ENCODE measurements at regions of chr6 and their contacts with region 1.

Region 1: GRCh38 chr6:26031595-26032339 is 55.5 kb upstream of the HFE start:
- DNase-seq: peak; percentile 56 to 94 (median 90)
- ATAC-seq: peak; percentile 79
- H3K4me3 ChIP-seq: peak overlapping the region; percentile 70
- H3K4me3 Mint-ChIP-seq: peak overlapping the region; percentile 89 to 98 (median 96)
- H3K27ac ChIP-seq: peak overlapping the region; percentile 69
- H3K27ac Mint-ChIP-seq: peak overlapping the region; percentile 93 to 98 (median 96)
- H3K4me1 ChIP-seq: peaks cover 23 to 31% of the 10 kb centered on the region in 2 donors
- H3K4me1 Mint-ChIP-seq: peaks cover 14 to 69% (median 43%) of the 10 kb centered on the region in 7 donors
- H3K27me3 ChIP-seq: no peaks in the 10 kb centered on the region
- H3K27me3 Mint-ChIP-seq: peaks cover 0 to 7% (median 0%) of the 10 kb centered on the region in 5 donors

Region 2: GRCh38 chr6:25359191-25359861 is 672.4 kb before region 1 on chr6:
- CTCF ChIA-PET with region 1: no interaction called
- POLR2A ChIA-PET with region 1: no interaction called
- intact Hi-C with region 1: no loop called
- DNase-seq: no peak
- ATAC-seq: no peak
- H3K4me3 ChIP-seq: no peak overlapping the region
- H3K4me3 Mint-ChIP-seq: no peak overlapping the region
- H3K27ac ChIP-seq: no peak overlapping the region
- H3K27ac Mint-ChIP-seq: peak overlapping the region in 4 of 9 donors; percentile 18 to 55 (median 38)
- H3K4me1 ChIP-seq: no peaks in the 10 kb centered on the region
- H3K4me1 Mint-ChIP-seq: peaks cover 0 to 69% (median 34%) of the 10 kb centered on the region in 7 donors
- H3K27me3 ChIP-seq: no peaks in the 10 kb centered on the region
- H3K27me3 Mint-ChIP-seq: no peaks in the 10 kb centered on the region

Region 3: GRCh38 chr6:26045065-26045927 is 13.5 kb after region 1 on chr6:
- CTCF ChIA-PET with region 1: interaction called, 69 read pairs
- POLR2A ChIA-PET with region 1: interaction called, 2,497 read pairs
- intact Hi-C with region 1: loop called (anchors 1 kb)
- DNase-seq: peak; percentile 39 to 93 (median 89)
- ATAC-seq: peak; percentile 68
- H3K4me3 ChIP-seq: peak overlapping the region; percentile 91
- H3K4me3 Mint-ChIP-seq: peak overlapping the region; percentile 87 to 98 (median 94)
- H3K27ac ChIP-seq: peak overlapping the region; percentile 90
- H3K27ac Mint-ChIP-seq: peak overlapping the region; percentile 80 to 98 (median 95)
- H3K4me1 ChIP-seq: peaks cover 7 to 19% of the 10 kb centered on the region in 2 donors
- H3K4me1 Mint-ChIP-seq: peaks cover 8 to 51% (median 20%) of the 10 kb centered on the region in 7 donors
- H3K27me3 ChIP-seq: no peaks in the 10 kb centered on the region
- H3K27me3 Mint-ChIP-seq: peaks cover 0 to 3% (median 0%) of the 10 kb centered on the region in 5 donors

Region 4: GRCh38 chr6:26087284-26088115 is 55.7 kb after region 1 on chr6 and contains the start of gene HFE:
- CTCF ChIA-PET with region 1: no interaction called
- POLR2A ChIA-PET with region 1: interaction called, 24 read pairs
- intact Hi-C with region 1: no loop called
- DNase-seq: peak in 8 of 9 donors; percentile 32 to 46 (median 38)
- ATAC-seq: peak; percentile 41
- H3K4me3 ChIP-seq: peak within 1 kb of the TSS; percentile 88
- H3K4me3 Mint-ChIP-seq: peak within 1 kb of the TSS; percentile 84 to 91 (median 88)
- H3K27ac ChIP-seq: peak within 1 kb of the TSS; percentile 72
- H3K27ac Mint-ChIP-seq: peak within 1 kb of the TSS; percentile 73 to 91 (median 84)
- H3K4me1 ChIP-seq: peaks cover 18 to 23% of the 10 kb centered on the region in 2 donors
- H3K4me1 Mint-ChIP-seq: peaks cover 31 to 51% (median 39%) of the 10 kb centered on the region in 7 donors
- H3K27me3 ChIP-seq: no peaks in the 10 kb centered on the region
- H3K27me3 Mint-ChIP-seq: peaks cover 0 to 5% (median 5%) of the 10 kb centered on the region in 5 donors
- total RNA-seq, gene HFE: 1.5 to 4.6 (median 2.5) TPM

Region 5: DNA sequence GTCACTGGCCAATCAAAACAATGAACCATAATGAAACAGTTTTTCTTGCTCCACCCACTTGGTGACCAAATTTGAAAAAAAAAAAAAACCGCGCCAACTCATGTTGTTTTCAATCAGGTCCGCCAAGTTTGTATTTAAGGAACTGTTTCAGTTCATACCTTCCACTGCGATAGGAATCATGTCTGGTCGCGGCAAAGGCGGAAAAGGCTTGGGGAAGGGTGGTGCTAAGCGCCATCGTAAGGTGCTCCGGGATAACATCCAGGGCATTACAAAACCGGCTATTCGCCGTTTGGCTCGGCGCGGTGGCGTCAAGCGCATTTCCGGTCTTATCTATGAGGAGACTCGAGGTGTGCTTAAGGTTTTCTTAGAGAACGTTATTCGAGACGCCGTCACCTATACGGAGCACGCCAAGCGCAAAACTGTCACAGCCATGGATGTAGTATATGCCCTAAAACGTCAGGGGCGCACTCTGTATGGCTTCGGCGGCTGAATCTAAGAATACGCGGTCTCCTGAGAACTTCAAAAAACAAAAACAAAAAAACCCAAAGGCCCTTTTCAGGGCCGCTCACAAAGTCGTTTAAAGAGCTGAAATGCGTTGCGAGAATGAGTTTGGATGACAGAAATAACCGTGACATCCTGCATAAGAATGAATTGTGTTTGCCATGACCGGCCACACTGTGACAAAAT is 72.1 kb after region 1 on chr6:
- CTCF ChIA-PET with region 1: interaction called, 3 read pairs
- POLR2A ChIA-PET with region 1: interaction called, 78 read pairs
- intact Hi-C with region 1: loop called (anchors 1 kb)
- DNase-seq: peak; percentile 83 to 96 (median 95)
- ATAC-seq: peak; percentile 94
- H3K4me3 ChIP-seq: peak overlapping the region; percentile 40
- H3K4me3 Mint-ChIP-seq: peak overlapping the region; percentile 81 to 97 (median 89)
- H3K27ac ChIP-seq: peak overlapping the region; percentile 75
- H3K27ac Mint-ChIP-seq: peak overlapping the region; percentile 96 to 100 (median 98)
- H3K4me1 ChIP-seq: peaks cover 4 to 12% of the 10 kb centered on the region in 2 donors
- H3K4me1 Mint-ChIP-seq: peaks cover 7 to 25% (median 22%) of the 10 kb centered on the region in 7 donors
- H3K27me3 ChIP-seq: no peaks in the 10 kb centered on the region
- H3K27me3 Mint-ChIP-seq: peaks cover 0 to 3% (median 0%) of the 10 kb centered on the region in 5 donors

Region 6: DNA sequence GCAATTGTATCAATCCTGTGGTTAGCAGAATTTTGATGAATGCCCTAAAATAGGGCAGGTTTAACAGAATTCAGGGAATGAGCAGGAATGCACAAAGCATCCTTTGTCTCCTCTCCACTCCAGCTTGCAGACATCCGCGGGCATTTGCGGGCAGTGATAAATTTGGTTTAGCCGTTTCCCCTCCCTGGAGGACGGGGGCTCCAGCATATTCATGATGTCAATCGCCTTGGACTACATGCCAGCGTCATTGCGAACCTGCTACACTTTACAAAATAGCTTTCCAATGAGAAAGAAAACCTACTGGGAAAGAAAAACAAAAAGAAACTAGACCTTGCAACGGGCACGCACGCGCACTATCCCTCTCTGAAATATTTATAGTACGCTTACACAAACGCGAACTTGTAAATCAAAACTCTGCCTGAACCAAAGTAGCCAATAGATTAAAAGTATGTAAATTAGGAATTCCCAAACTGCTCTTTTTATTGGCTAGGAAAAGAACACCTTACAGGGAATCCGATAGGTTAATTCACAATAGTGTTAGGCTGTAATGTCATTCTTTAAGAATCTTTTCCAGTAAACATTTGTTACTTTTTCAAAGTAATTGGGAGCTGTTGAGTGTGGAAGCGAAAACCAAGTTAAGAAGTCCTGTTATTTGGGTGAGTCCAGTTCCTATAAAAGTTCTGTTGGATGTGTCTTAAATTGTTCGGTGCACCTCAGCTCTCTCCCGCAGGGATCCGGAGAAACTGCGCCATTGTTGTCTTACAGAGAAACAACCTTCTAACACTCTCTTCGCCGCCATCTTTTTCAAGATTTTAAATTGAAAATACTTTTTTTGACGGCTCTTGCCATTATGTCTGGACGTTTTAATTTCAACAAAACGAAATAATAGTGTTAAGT is 192.1 kb after region 1 on chr6:
- CTCF ChIA-PET with region 1: no interaction called
- POLR2A ChIA-PET with region 1: interaction called, 11 read pairs
- intact Hi-C with region 1: no loop called
- DNase-seq: peak in 7 of 9 donors; percentile 79 to 89 (median 84)
- ATAC-seq: peak; percentile 93
- H3K4me3 ChIP-seq: peak overlapping the region; percentile 77
- H3K4me3 Mint-ChIP-seq: no peak overlapping the region
- H3K27ac ChIP-seq: peak overlapping the region; percentile 77
- H3K27ac Mint-ChIP-seq: no peak overlapping the region
- H3K4me1 ChIP-seq: peaks cover 14 to 18% of the 10 kb centered on the region in 2 donors
- H3K4me1 Mint-ChIP-seq: peaks cover 10 to 25% (median 18%) of the 10 kb centered on the region in 7 donors
- H3K27me3 ChIP-seq: no peaks in the 10 kb centered on the region
- H3K27me3 Mint-ChIP-seq: no peaks in the 10 kb centered on the region

Region 7: DNA sequence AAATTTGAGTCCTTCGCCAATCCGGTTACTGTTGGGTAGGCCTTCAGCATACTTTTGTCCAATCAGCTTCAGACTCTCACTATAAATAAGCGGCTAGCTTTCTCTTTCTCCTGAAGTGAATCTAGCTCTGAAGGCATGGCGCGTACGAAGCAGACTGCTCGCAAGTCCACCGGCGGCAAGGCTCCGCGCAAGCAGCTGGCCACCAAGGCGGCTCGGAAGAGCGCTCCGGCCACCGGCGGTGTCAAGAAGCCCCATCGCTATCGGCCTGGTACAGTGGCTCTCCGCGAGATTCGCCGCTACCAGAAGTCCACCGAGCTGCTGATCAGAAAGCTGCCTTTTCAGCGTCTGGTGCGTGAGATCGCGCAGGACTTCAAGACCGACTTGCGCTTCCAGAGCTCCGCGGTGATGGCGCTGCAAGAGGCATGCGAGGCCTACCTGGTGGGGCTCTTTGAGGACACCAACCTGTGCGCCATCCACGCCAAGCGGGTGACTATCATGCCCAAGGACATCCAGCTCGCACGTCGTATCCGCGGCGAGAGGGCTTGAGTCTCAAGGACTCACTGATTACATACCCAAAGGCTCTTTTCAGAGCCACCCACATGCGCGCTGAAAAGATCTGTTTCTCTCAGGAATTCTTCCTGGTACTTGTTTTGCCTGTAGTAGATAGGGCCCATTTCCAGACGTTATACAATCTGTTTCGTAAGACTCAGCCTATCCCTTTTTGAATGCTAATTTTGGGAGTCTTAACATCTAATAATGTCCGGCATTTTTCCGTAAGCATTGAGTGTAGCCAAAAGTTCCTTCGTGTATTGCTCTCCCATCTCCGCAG is 1778.4 kb after region 1 on chr6:
- CTCF ChIA-PET with region 1: no interaction called
- POLR2A ChIA-PET with region 1: interaction called, 35 read pairs
- intact Hi-C with region 1: loop called in 1 of 2 experiments (anchors 5 kb)
- DNase-seq: peak; percentile 66 to 96 (median 92)
- ATAC-seq: peak; percentile 71
- H3K4me3 ChIP-seq: peak overlapping the region; percentile 76
- H3K4me3 Mint-ChIP-seq: peak overlapping the region; percentile 81 to 97 (median 94)
- H3K27ac ChIP-seq: peak overlapping the region; percentile 86
- H3K27ac Mint-ChIP-seq: peak overlapping the region; percentile 95 to 99 (median 98)
- H3K4me1 ChIP-seq: peaks cover 20 to 42% of the 10 kb centered on the region in 2 donors
- H3K4me1 Mint-ChIP-seq: peaks cover 18 to 82% (median 61%) of the 10 kb centered on the region in 7 donors
- H3K27me3 ChIP-seq: no peaks in the 10 kb centered on the region
- H3K27me3 Mint-ChIP-seq: peaks cover 0 to 9% (median 0%) of the 10 kb centered on the region in 5 donors

Region 8: DNA sequence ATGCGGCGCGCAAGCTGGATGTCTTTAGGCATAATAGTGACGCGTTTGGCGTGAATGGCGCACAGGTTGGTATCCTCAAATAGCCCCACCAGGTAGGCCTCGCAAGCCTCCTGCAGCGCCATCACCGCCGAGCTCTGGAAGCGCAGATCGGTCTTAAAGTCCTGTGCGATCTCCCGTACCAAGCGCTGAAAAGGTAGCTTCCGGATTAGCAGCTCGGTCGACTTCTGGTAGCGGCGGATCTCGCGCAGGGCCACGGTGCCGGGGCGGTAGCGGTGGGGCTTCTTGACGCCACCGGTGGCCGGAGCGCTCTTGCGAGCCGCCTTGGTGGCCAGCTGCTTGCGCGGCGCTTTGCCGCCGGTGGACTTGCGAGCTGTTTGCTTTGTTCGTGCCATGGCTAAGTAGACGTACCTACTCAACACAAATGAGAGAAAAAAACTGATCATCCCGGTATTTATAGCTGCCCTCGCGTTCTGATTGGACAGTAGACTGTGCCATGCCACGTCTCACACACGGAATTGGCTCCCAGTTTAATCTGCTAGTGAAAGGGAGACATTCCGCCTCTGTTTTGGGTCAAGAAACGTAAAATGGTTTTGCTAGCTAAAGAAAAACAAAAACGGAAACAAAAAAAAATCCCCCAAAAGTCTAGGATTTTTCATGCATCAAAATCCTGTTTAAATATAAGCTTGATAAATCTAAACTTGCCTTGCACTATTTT is 1840.3 kb after region 1 on chr6:
- CTCF ChIA-PET with region 1: interaction called, 3 read pairs
- POLR2A ChIA-PET with region 1: interaction called, 34 read pairs
- intact Hi-C with region 1: no loop called
- DNase-seq: peak; percentile 68 to 97 (median 94)
- ATAC-seq: peak; percentile 88
- H3K4me3 ChIP-seq: peak overlapping the region; percentile 69
- H3K4me3 Mint-ChIP-seq: peak overlapping the region; percentile 83 to 99 (median 94)
- H3K27ac ChIP-seq: peak overlapping the region; percentile 84
- H3K27ac Mint-ChIP-seq: peak overlapping the region; percentile 95 to 98 (median 97)
- H3K4me1 ChIP-seq: peaks cover under 1 to 19% of the 10 kb centered on the region in 2 donors
- H3K4me1 Mint-ChIP-seq: peaks cover 15 to 69% (median 42%) of the 10 kb centered on the region in 7 donors
- H3K27me3 ChIP-seq: no peaks in the 10 kb centered on the region
- H3K27me3 Mint-ChIP-seq: peaks cover 0 to 8% (median 0%) of the 10 kb centered on the region in 5 donors

Measured in naive thymus-derived CD4-positive, alpha-beta T cell (primary cell).